Left lung (tissue), 14 donors: ENCODE measurements at regions of chr12 and their contacts with region 1.

Region 1: GRCh38 chr12:55926738-55927587 is 731 bp downstream of the PYM1 start:
- DNase-seq: peak; percentile 90 to 95 (median 92)
- ATAC-seq: peak; percentile 83
- H3K4me3 ChIP-seq: peak overlapping the region; percentile 77 to 78
- H3K27ac ChIP-seq: peak overlapping the region; percentile 97 to 99
- H3K4me1 ChIP-seq: peaks cover 24 to 63% of the 10 kb centered on the region in 2 donors
- H3K27me3 ChIP-seq: no peaks in the 10 kb centered on the region
- CTCF ChIP-seq: peak; percentile 37 to 49

Region 2: DNA sequence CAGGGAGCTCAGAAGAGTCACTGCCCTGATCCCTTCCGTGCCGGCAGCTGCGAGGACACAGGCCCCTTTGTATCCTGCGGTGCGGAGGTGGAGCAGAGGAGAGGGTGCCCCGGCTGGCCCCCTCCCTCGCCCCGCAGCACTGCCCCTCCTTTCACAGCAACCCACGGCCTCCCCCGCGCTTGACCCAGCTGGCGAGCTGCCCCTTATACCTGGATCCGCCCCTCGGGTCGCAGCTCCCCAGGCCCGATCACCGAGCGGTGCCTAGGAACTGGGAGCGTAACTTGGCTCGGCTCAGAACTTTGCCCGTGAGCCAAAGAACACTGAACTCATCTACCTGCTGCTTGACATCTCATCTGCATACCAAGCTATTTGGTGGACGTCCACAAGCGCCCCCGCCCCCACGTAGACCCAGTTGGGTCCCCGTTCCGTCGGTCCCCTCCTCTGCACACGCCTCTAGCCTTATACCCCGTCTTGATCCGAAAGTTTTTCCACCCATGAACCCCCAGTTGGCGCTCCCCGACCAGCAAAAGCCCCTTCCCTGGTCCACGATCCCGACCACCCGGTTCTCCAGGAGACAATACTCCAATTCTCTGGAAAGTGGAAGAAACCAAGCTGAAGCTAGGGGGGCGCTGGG is 96.9 kb before region 1 on chr12:
- intact Hi-C with region 1: loop called in 1 of 2 experiments (anchors 10 kb)
- DNase-seq: peak in 3 of 4 donors; percentile 51 to 88 (median 63)
- ATAC-seq: peak; percentile 39
- H3K4me3 ChIP-seq: peak overlapping the region; percentile 74 to 96
- H3K27ac ChIP-seq: peak overlapping the region; percentile 84 to 93
- H3K4me1 ChIP-seq: peaks cover 24 to 52% of the 10 kb centered on the region in 2 donors
- H3K27me3 ChIP-seq: no peaks in the 10 kb centered on the region
- CTCF ChIP-seq: no peak

Region 3: DNA sequence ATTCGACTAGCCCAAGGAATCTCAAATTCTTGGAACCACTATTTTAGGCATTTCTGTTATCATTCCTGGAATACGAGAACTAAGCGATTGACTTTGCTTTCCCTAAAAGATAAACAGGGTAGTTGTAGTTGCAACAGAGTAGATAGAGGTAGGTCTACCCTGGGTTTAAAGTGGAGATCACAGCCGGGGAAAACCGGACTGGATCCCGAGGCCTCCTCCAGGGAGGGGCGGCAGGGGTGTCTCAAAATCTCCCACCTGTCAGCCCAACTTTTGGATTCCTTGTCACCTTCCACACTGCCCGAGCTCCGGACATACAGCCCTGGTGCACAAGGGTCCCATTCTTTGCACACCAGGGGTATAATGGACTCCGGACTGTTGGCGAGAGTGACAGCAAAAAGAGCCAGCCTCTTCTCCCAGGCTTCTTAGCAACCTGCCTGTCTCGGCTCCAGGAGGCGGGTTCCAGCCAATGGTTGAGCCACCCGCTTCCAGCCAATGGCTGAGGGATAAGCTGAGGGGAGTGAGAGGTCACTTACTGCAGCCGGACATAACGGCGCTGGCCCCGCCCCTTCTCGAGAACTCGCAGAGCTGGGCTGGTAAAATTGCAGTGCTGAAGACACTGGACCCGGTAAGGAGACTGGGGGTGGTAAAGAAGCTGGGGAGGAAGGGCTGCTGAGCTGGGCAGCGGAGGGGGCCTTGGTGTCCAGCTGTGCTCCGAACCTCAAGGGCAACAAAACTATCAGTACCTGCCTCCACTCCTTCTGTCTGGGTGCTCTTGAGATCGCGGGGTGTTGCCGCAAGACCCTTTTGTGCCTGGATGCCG is 70.0 kb after region 1 on chr12 and contains the start of gene SUOX:
- intact Hi-C with region 1: no loop called
- DNase-seq: peak; percentile 89 to 99 (median 98)
- ATAC-seq: peak; percentile 99
- H3K4me3 ChIP-seq: peak within 1 kb of the TSS; percentile 59 to 61
- H3K27ac ChIP-seq: peak within 1 kb of the TSS; percentile 76 to 82
- H3K4me1 ChIP-seq: peaks cover 3 to 26% of the 10 kb centered on the region in 2 donors
- H3K27me3 ChIP-seq: no peaks in the 10 kb centered on the region
- CTCF ChIP-seq: no peak
- polyA plus RNA-seq, gene SUOX: 36.0 to 49.6 (median 42.7) TPM